ENCODE measurements at regions of chr5 and their contacts with region 1.

Region 1: GRCh38 chr5:173972925-173973615 is 15.9 kb upstream of the C5orf47 start:
- DNase-seq: peak; percentile 74 to 93 (median 88)
- H3K4me3 ChIP-seq: peak overlapping the region; percentile 34 to 79 (median 64)
- H3K27ac ChIP-seq: peak overlapping the region in 55 of 59 donors; percentile 9 to 87 (median 69)
- H3K27me3 ChIP-seq: no peaks in the 10 kb centered on the region
- CTCF ChIP-seq: peak; percentile 83 to 98 (median 94)

Region 2: GRCh38 chr5:173887610-173888472 is 85.2 kb before region 1 on chr5 and contains the start of gene CPEB4:
- intact Hi-C with region 1: loop called (anchors 5 kb)
- DNase-seq: peak; percentile 98 to 100 (median 100)
- H3K4me3 ChIP-seq: peak within 1 kb of the TSS; percentile 60 to 99 (median 91)
- H3K27ac ChIP-seq: peak within 1 kb of the TSS; percentile 84 to 100 (median 98)
- H3K27me3 ChIP-seq: no peaks in the 10 kb centered on the region
- CTCF ChIP-seq: peak in 18 of 56 donors; percentile 4 to 40 (median 26)
- total RNA-seq, gene CPEB4: 95.3 to 182 (median 133) TPM

Region 3: GRCh38 chr5:173917788-173918786 is 55.0 kb before region 1 on chr5:
- intact Hi-C with region 1: loop called in 1 of 2 experiments (anchors 5 kb)
- DNase-seq: peak in 3 of 10 donors; percentile 46 to 62 (median 47)
- H3K4me3 ChIP-seq: peak overlapping the region; percentile 27 to 69 (median 55)
- H3K27ac ChIP-seq: peak overlapping the region; percentile 51 to 95 (median 87)
- H3K27me3 ChIP-seq: no peaks in the 10 kb centered on the region
- CTCF ChIP-seq: peak in 3 of 56 donors; percentile 9 to 15 (median 15)

Region 4: DNA sequence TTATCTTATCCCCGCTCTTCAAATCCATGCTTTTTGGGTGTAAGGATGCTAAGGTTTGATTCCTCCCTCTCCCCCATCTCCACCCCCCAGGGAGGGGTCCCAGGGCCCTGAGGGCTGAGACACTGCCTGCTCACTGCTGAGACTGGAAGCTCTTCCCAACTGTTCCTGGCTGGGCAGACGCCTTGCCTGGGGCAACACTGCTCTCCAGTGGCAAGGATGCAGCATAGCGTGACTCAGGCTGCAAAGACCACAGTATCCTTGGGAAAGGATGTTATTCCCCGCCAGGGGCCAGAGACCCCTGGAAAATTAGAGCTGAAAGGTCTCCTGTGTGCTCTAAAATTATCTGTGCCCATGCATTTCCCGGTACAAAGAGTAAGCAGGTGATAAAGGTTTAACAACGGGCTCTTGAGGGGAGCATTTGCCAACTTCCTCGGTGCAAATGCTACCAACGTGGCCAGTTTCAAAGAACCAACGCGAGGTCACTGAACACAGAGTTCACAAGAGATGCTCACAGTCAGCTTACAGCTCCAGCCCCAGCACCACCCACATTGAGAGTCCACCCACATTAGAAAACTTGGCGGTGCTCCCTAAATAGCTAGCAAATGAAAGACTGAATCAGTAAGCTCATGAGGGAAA is 344.3 kb after region 1 on chr5:
- intact Hi-C with region 1: loop called in 1 of 2 experiments (anchors 5 kb)
- DNase-seq: peak in 8 of 10 donors; percentile 38 to 80 (median 70)
- H3K4me3 ChIP-seq: peak overlapping the region in 21 of 59 donors; percentile 5 to 48 (median 29)
- H3K27ac ChIP-seq: no peak overlapping the region
- H3K27me3 ChIP-seq: peaks cover 0 to 8% (median 0%) of the 10 kb centered on the region in 45 donors
- CTCF ChIP-seq: peak; percentile 52 to 92 (median 81)

Region 5: DNA sequence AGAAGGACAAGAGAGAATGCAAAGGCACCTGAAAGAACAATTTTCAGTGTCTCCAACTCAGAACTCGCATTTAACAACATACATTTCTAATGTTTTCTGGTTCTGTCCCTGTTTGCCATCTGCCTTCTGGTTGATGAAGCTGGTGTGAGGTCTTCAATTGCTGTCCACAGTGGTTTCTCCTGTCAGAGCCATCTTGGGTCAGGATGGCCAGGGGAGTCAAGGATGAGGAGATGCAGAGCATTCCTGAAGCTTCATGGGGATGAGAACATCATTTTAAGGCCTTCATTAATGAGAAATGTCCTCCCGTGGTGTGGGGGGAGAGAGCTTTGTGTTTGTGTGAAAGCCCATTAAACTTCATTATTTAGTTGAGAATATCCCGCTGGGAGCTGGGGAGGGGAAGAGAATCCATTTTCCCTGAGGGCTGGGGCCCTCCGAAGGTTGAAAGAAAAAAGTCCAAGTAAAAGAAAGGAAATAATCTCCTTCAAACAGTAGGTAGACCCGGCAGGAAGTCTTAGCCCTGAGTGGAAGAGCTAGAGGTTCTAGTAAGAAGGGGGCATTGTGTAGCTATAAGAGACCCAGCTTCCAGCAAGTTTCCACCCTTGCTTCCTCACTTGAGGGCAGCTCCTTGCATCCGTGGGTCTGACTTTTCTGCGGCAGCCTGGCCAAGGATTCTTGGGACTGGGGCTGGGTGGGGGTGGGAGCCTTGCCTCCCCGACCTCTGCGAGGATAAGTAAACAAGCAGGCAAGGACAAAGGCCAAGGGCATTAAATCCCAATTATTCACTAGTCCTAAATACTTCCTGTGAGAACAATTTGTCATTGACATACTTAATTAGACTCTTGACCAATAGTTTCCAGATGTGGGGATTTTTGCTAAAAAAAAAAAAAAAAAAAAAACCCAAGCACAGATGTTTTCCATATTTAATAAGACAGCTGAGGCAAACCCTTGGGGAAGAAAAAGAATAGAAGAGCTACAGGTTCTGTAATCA is 870.5 kb after region 1 on chr5:
- intact Hi-C with region 1: no loop called
- DNase-seq: no peak
- H3K4me3 ChIP-seq: no peak overlapping the region
- H3K27ac ChIP-seq: no peak overlapping the region
- H3K27me3 ChIP-seq: peaks cover 0 to 5% (median 0%) of the 10 kb centered on the region in 45 donors
- CTCF ChIP-seq: no peak